Endothelial cell of umbilical vein (primary cell): ENCODE measurements at regions of chr17 and their contacts with region 1.

Region 1: DNA sequence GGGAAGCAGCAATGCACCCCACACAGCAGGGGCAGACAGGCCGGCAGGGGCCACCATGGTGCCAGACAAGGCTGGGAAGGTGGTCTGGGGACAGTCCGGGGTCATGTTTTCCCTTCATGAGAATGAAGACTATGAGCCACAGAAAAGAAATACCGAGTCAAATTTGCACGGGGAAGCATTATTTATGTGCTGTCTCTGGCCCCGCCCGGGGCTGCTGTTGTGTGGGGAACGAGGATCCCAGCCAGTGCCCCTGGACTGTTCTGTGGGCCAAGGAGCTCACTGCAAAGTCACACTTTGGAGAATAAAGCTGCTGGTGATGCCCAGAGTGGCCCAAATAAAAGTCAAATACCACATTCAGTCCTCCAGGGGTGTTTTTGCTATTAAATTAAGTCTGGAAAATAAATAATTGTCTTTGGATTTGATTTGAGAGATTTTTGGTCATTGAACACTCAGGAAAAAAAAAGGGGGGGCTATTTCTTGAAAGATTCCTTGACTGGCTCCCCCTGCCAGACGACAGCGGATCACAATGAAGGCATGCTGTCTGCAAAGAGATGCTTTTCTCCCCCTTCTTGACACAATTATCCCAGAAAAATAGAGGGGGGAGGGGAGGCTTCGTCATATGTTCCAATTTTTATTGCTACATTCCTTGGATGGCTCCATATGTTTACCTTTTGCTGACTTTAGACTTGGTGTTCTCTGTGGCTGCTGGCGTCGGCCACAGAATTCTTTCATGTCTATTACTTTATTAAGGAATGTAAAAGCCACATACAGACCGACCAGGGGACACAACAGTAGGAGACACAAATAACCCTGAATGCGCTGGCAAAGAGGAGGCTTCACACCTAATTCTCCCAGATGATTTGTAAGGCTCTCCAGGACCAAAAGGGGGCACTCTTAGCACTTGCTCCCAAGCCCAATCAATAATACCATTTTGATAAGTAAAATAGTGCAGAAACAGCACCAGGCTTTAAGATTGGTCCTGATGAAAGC is 27.1 kb upstream of the ANKFN1 start:
- DNase-seq: peak; percentile 56
- H3K4me3 ChIP-seq: no peak overlapping the region
- H3K27ac ChIP-seq: no peak overlapping the region
- H3K4me1 ChIP-seq: no peaks in the 10 kb centered on the region
- H3K27me3 ChIP-seq: peaks cover 8 to 10% of the 10 kb centered on the region in 2 experiments
- CTCF ChIP-seq: peak; percentile 62 to 65
- POLR2A ChIP-seq: no peak

Region 2: GRCh38 chr17:56478836-56479447 is 352.8 kb after region 1 on chr17:
- CTCF ChIA-PET with region 1: interaction called, 25 read pairs
- POLR2A ChIA-PET with region 1: no interaction called
- dilution Hi-C with region 1: no loop called
- intact Hi-C with region 1: loop called (anchors 1 kb)
- DNase-seq: peak; percentile 44
- H3K4me3 ChIP-seq: no peak overlapping the region
- H3K27ac ChIP-seq: no peak overlapping the region
- H3K4me1 ChIP-seq: no peaks in the 10 kb centered on the region
- H3K27me3 ChIP-seq: peaks cover 0 to 7% of the 10 kb centered on the region in 2 experiments
- CTCF ChIP-seq: peak; percentile 30 to 52
- POLR2A ChIP-seq: no peak